ENCODE measurements at regions of chr17 and their contacts with region 1.

Region 1: DNA sequence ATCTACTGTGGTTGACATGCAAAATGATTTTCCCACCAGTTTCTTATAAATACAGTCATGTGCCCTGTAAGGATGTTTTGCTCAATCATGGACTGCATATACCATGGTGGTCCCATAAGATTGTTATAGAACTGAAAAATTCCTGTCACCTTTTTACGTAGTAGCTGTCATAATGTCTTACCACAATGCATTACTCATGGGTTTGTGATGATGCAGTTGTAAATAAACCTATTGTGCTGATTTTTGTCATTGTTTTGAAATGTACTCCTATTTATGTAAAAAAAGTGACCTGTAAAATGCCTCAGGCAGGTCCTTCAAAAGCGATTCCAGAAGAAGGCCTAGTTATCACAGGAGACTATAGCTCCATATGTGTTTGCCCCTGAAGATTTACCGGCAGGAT is 695.4 kb upstream of the KIF2B start:
- DNase-seq: no peak
- ATAC-seq: no peak

Region 2: GRCh38 chr17:52995147-52995546 is 132.2 kb before region 1 on chr17:
- intact Hi-C with region 1: no loop called
- DNase-seq: no peak
- ATAC-seq: no peak

Region 3: DNA sequence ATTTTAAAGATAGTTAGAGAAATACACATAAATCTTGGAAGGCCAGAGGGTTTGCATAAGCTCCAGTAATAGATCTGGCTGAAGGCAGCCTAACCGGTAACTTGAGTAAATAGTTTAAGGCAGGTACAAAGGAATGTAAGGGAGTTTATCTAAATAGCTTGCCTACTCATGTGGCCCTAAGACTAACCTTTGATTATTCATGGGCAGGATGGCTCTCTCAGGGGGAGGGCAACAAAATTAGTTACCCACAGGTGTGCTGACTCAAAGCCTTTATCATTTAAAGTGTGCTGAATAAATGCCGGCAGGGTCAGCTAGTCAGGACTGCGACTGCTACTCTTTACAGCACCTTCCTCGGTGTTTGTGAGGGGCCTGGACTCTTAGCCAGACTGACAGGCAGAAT is 65.9 kb before region 1 on chr17:
- intact Hi-C with region 1: no loop called
- DNase-seq: no peak
- ATAC-seq: no peak

Region 4: GRCh38 chr17:53176629-53177028 is 49.3 kb after region 1 on chr17:
- intact Hi-C with region 1: loop called (anchors 10 kb)
- DNase-seq: no peak
- ATAC-seq: no peak

Measured in Right ventricle myocardium superior (tissue), 1 donor.